ENCODE measurements at regions of chr7 and their contacts with region 1.

Region 1: DNA sequence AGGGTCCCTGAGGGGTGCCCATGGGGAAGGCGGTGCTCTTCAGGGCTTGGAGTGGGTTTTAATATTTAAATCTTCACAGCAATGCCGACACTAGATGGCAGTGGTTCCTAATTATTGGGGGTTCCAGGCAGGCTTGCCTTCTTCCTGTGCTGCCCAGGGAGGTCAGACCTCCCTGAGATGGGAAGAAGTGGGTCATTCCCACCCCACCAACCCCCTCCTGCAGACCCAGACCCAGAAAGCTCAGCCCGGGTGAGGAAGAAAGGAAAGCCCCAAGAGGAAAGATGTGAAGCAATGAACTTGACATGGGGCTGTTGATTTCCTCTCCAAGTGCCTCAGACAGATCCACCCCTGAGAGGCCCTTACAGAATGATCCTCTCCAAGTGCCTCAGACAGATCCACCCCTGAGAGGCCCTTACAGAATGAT is 85.1 kb upstream of the LANCL2 start:
- DNase-seq: peak; percentile 33 to 84
- ATAC-seq: peak; percentile 72 to 92 (median 85)
- H3K4me3 ChIP-seq: no peak overlapping the region
- H3K4me3 Mint-ChIP-seq: no peak overlapping the region
- H3K27ac ChIP-seq: no peak overlapping the region
- H3K27ac Mint-ChIP-seq: no peak overlapping the region
- H3K4me1 ChIP-seq: peaks cover 5% of the 10 kb centered on the region
- H3K4me1 Mint-ChIP-seq: peaks cover 5 to 6% of the 10 kb centered on the region in 2 donors
- H3K27me3 ChIP-seq: peaks cover 2% of the 10 kb centered on the region
- H3K27me3 Mint-ChIP-seq: peaks cover 12 to 20% of the 10 kb centered on the region in 2 donors
- CTCF ChIP-seq: peak; percentile 76

Region 2: GRCh38 chr7:55415173-55415778 is 135.2 kb after region 1 on chr7:
- intact Hi-C with region 1: loop called (anchors 1 kb)
- DNase-seq: peak; percentile 70 to 90
- ATAC-seq: peak; percentile 94 to 100 (median 99)
- H3K4me3 ChIP-seq: no peak overlapping the region
- H3K4me3 Mint-ChIP-seq: no peak overlapping the region
- H3K27ac ChIP-seq: no peak overlapping the region
- H3K27ac Mint-ChIP-seq: no peak overlapping the region
- H3K4me1 ChIP-seq: no peaks in the 10 kb centered on the region
- H3K4me1 Mint-ChIP-seq: peaks cover 0 to 4% of the 10 kb centered on the region in 2 donors
- H3K27me3 ChIP-seq: no peaks in the 10 kb centered on the region
- H3K27me3 Mint-ChIP-seq: no peaks in the 10 kb centered on the region
- CTCF ChIP-seq: peak; percentile 92

Measured in natural killer cell (primary cell).